ENCODE measurements at regions of chr10 and their contacts with region 1.

Region 1: GRCh38 chr10:14801723-14802122 is 27.0 kb upstream of the FAM107B start:
- DNase-seq: no peak
- H3K4me3 ChIP-seq: no peak overlapping the region
- H3K27me3 ChIP-seq: peaks cover 2% of the 10 kb centered on the region
- CTCF ChIP-seq: no peak

Region 2: DNA sequence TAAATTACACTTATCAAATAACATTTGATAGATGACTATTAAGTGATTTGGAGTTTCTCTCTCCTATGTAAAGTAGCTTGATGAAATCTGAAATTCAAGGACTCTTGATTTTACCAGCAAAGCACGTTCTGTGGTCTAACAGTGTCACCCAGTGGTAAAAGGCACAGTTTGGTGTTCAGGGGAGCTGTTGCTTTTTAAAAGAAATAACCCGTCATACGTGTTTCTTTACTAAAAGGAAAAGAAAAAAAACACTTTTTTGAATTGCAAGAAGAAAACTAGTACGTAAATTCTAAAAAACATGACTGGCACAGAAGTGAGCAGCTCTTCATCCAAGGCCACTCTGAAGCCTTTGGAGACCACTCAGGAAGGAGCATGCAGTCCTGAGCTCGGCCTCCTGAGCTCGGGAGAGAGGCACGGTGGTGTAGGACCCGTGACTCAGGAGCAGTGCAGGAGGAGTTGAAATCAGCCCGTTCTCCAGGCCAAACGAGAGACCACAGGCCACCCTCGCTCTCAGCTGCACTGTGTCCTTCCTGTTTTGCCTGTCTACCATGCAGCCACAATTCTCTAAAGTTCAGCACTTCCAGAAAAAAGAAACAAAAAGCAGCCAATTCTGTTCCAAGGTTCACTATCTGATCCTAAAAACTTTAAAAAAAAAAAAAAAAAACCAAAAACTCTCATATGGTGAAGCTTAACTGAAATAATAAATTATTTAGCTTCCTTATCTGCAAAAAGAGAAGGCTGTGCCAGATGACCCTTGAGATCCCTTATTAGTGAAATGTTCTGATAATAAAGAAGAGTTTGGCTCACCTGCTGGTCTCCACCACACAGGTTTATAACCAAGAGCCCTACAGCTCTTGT is 258.4 kb before region 1 on chr10:
- CTCF ChIA-PET with region 1: no interaction called
- POLR2A ChIA-PET with region 1: interaction called, 10 read pairs
- DNase-seq: no peak
- H3K4me3 ChIP-seq: no peak overlapping the region
- H3K27me3 ChIP-seq: no peaks in the 10 kb centered on the region
- CTCF ChIP-seq: peak; percentile 22; the same call in 1 of the 2 replicates

Region 3: DNA sequence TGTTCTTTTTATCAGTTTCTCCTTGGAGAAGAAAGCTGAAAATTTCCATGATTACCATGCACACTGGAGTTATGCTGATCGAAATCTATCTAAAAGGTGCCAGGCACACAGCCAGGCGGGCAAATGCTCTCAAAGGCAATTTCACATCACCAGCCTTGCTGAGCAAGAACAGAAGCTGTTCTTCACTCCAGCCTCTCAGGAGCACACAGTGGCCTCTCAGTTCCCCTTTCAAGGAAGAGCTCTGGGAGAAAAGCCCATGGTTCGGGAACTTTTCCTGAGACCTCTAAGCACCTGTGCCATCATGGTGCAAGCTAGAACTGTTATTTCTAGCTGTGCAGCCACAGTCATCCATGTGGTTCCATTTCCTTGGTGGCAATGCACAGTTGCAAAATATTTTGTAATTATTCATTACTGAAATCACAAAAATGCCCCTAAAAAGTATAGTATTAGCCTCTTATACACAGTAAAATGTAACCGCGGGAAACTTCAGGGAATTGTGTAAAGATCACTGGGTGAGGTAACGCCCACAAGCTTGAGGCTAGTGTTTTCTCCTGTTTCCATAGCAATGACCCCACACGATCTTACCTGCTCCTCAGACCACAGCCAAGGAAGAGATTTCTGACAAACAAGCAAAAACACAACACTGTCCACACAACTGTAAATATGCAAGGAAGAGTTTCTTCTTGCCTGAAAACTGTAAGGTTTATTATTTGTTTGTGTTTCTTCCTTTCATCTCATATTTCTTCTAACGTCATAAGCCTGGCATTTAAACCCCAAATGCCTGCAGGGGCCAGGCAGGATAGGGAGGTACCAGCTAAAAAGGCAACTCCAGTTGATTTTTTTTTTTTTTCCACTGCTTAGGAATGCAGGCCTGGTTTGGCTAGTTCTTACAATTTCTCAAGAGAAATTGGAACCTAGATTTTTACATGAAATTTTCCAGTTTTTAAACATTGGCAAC is 148.2 kb before region 1 on chr10:
- CTCF ChIA-PET with region 1: no interaction called
- POLR2A ChIA-PET with region 1: no interaction called
- DNase-seq: peak; percentile 74
- H3K4me3 ChIP-seq: no peak overlapping the region
- H3K27me3 ChIP-seq: no peaks in the 10 kb centered on the region
- CTCF ChIP-seq: no peak

Region 4: GRCh38 chr10:14782691-14783363 is 18.9 kb before region 1 on chr10:
- CTCF ChIA-PET with region 1: no interaction called
- POLR2A ChIA-PET with region 1: no interaction called
- DNase-seq: no peak
- H3K4me3 ChIP-seq: no peak overlapping the region
- H3K27me3 ChIP-seq: no peaks in the 10 kb centered on the region
- CTCF ChIP-seq: no peak

Region 5: DNA sequence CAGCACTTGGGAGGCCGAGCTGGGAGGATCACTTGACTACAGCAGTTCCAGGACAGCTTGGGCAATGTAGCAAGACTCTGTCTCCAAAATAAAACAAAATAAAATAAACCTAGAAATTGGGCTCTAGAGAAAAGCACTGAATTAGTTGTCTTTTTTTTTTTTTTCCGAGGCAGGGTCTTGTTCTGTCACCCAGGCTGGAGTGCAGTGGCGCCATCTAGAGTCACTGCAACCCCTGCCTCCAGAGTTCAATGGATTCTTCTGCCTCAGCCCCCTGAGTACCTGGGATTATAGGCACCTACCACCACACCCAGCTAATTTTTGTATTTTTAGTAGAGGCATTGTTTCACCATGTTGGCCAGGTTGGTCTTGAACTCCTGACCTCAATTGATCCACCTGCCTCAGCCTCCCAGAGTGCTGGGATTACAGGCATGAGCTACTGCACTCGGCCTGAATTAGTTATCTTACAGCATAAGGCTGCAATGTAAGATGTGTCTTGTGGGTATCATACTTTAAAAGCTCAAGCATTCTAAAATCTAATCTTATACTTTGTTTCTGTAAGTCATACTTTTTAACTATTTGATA is 170.2 kb after region 1 on chr10:
- CTCF ChIA-PET with region 1: no interaction called
- POLR2A ChIA-PET with region 1: no interaction called
- DNase-seq: no peak
- H3K4me3 ChIP-seq: no peak overlapping the region
- H3K27me3 ChIP-seq: no peaks in the 10 kb centered on the region; the same call in 1 of the 2 replicates
- CTCF ChIP-seq: peak; percentile 68

Measured in BJ (cell line).